HCT116 (cell line): ENCODE measurements at regions of chr5 and their contacts with region 1.

Region 1: DNA sequence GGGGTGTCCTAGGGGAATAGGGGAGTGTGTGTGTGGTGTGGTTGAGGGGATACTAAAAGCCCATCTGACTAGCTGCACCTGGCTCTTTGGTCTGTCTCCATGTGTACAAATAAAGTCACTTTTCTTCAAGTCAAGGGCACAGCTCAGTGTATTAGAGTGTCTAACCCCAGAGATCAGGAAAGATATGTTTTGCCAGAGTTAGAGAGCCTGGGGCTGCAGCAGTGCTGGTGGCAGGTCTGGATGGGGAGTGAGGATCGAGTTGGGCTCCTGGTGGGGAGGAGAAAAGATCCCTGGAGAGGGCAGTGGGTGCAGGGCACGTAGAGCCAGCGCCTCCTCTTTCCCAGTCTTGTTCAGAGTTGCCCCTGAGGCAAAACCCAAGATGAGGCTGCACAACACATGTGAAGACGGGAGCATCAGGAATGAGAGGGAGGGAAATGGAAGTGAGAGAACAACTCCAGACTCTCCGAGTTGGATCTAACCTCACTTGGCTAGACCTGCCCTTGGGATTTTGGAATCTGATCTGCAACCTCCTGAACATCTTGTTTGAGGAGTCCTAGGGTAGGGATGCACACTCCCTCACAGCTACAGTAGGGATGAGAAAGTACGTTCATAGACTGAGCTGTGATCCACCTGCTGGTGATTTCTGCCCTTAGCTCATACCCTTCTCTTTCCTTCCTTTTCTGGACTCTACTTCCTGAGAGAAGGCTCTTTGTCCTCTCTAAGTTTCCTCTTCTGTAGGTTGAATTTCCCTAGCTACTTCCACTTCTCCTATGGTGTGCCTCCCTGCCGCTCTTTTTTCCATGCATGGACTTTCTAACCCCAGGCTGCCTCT is 309.9 kb downstream of the ZSWIM6 start:
- DNase-seq: no peak
- ATAC-seq: no peak
- H3K4me3 ChIP-seq: no peak overlapping the region
- H3K27ac ChIP-seq: no peak overlapping the region
- H3K4me1 ChIP-seq: 0 out of 4 replicates have a peak, but pooled peaks cover 0 to 4% of the 10 kb centered on the region in 2 experiments
- H3K27me3 ChIP-seq: peaks cover 11% of the 10 kb centered on the region
- CTCF ChIP-seq: peak in 1 of 3 experiments; percentile 7; a peak in 1 of 6 replicates
- POLR2A ChIP-seq: no peak
- RAD21 ChIP-seq: peak; percentile 34; the same call in 1 of the 2 replicates

Region 2: GRCh38 chr5:61162010-61162831 is 479.7 kb before region 1 on chr5 and contains the start of gene SMIM15:
- CTCF ChIA-PET with region 1: no interaction called
- POLR2A ChIA-PET with region 1: no interaction called
- RAD21 ChIA-PET with region 1: no interaction called
- intact Hi-C with region 1: loop called (anchors 5 kb)
- DNase-seq: peak; percentile 79
- ATAC-seq: peak; percentile 94
- H3K4me3 ChIP-seq: peak within 1 kb of the TSS; percentile 92 to 95
- H3K27ac ChIP-seq: peak within 1 kb of the TSS; percentile 87
- H3K4me1 ChIP-seq: peaks cover 0 to 16% of the 10 kb centered on the region in 2 experiments; a peak in 2 of 4 replicates
- H3K27me3 ChIP-seq: no peaks in the 10 kb centered on the region
- CTCF ChIP-seq: no peak
- POLR2A ChIP-seq: peak; percentile 59
- RAD21 ChIP-seq: no peak
- total RNA-seq, gene SMIM15: 83.9 TPM

Region 3: DNA sequence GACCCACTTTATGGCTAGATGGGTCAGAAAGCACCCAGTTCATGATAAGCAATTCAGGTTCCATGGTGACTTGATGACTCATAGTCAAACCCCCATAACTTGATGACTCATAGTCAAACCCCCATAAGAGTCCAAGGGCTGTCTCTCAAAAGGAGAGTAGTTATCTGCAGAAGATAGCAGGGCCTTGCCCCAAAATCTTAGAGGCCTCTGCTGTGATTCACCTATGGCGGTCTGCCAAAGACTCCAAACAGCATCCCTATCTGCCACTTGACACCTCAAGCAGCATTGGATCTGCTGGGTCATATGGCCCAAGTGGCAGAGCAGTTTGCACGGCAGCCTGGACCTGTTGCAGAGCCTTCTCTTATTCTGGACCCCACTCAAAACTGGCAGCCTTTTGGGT is 268.8 kb after region 1 on chr5:
- CTCF ChIA-PET with region 1: no interaction called
- POLR2A ChIA-PET with region 1: no interaction called
- RAD21 ChIA-PET with region 1: no interaction called
- intact Hi-C with region 1: no loop called
- DNase-seq: no peak
- ATAC-seq: no peak
- H3K4me3 ChIP-seq: no peak overlapping the region
- H3K27ac ChIP-seq: no peak overlapping the region
- H3K4me1 ChIP-seq: no peaks in the 10 kb centered on the region
- H3K27me3 ChIP-seq: peaks cover 7% of the 10 kb centered on the region; the same call in 1 of the 2 replicates
- CTCF ChIP-seq: no peak
- POLR2A ChIP-seq: no peak
- RAD21 ChIP-seq: no peak

Region 4: GRCh38 chr5:62143268-62144229 is 501.6 kb after region 1 on chr5:
- CTCF ChIA-PET with region 1: no interaction called
- POLR2A ChIA-PET with region 1: no interaction called
- RAD21 ChIA-PET with region 1: no interaction called
- intact Hi-C with region 1: no loop called
- DNase-seq: peak; percentile 16
- ATAC-seq: peak; percentile 82
- H3K4me3 ChIP-seq: no peak overlapping the region
- H3K27ac ChIP-seq: no peak overlapping the region
- H3K4me1 ChIP-seq: no peaks in the 10 kb centered on the region
- H3K27me3 ChIP-seq: peaks cover 53% of the 10 kb centered on the region
- CTCF ChIP-seq: peak; percentile 20 to 69 (median 48); a peak in 5 of 6 replicates
- POLR2A ChIP-seq: no peak
- RAD21 ChIP-seq: peak; percentile 49